Activated CD8-positive, alpha-beta T cell treated with anti-CD3 and anti-CD28 coated beads, Interleukin-2, amount 10 ng/mL, durations not matched to agents 7 days and 5 days (primary cell): ENCODE measurements at regions of chr12 and their contacts with region 1.

Region 1: DNA sequence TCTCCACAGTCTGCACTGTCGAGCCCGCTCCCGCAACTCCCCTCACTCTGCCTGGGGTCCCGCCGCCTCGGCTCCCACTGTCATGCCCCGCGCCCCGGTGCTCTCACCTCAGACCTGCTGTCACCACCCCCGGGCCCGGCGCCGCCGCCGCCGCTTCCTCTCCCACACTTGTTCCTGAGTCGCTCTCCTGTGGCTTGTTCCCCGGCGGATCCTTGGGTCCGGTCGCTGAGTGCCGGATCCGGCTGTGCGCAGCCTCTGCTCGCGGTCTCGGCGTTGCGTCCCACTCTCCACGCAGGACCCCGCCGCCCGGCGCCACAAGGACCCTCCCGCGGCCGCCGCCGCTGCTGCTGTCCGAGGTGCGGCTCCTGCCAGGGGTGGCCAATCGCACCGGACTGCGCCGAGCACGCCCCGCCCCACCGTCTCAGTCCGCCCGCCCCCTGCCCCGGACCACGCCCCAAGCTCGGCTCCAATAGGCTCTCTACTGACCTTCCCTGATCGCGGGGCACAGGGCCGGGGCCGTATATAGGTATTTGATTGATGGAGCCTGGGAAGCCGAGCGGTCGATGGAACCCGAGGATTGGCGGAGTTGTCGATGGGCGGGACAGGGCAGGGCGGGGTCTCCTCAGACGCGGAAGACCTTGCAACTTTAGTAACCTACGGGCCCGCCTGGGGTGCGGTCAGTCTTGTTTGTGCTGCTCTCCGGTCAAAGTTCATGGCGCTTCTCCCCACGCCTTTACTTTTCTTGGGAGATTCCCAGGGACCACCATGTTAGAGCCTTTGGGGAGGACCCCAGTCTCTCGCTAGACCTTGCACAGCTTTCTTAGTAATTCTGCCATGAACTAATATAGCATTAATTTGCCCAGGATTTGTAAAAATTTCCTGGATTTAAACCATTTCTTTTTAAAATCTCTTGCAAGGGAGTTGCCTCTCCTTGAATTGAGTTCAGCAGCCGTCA is at the start of gene TAOK3:
- DNase-seq: peak; percentile 98
- ATAC-seq: peak; percentile 89
- H3K4me3 Mint-ChIP-seq: peak within 1 kb of the TSS; percentile 92
- H3K27ac Mint-ChIP-seq: peak within 1 kb of the TSS; percentile 85
- H3K4me1 Mint-ChIP-seq: peaks cover 47% of the 10 kb centered on the region
- H3K27me3 Mint-ChIP-seq: peaks cover 3% of the 10 kb centered on the region
- total RNA-seq, gene TAOK3: 57.1 to 61.4 TPM

Region 2: DNA sequence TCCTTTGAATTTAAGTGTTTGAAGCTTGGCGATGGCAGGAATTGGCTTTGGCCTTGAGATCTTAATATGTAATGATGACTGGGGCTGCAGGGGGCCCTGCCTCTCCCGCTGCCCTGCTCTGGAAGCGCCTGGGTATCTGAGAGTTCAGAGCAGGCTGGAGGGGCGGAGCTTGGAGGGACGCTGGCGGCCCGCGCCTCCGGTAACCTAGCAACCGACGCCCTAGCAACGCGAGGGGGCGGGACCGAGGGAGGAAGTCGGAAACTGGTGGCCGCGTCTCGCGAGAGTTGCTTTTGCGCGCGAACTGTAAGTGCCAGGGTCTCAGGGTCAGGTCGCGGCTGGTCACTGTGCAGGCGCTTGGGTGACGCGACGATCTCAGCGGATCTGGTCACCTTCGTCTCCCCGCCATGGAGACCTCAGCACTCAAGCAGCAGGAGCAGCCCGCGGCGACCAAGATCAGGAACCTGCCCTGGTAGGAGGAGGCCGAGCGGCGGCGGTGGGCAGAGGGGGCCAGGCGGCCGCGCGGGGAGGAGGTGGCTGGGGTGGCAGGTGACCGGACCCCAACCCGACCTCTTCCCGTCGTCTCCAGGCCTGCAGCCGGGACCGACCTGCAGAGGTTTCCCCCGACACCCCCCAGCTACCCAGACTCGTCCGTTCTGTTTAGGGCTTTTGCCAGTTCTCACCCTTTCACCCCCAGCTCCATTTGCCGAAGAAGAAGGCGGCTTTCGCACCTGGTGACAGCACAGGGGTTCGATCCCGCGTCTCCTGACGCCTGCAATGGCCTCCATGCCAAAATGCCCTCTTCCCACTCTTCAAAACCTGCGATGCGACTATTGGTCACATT is 356.2 kb before region 1 on chr12 and contains the start of gene RFC5:
- CTCF ChIA-PET with region 1: interaction called, 11 read pairs
- POLR2A ChIA-PET with region 1: no interaction called
- DNase-seq: peak; percentile 98
- ATAC-seq: peak; percentile 96
- H3K4me3 Mint-ChIP-seq: peak within 1 kb of the TSS; percentile 98
- H3K27ac Mint-ChIP-seq: peak within 1 kb of the TSS; percentile 94
- H3K4me1 Mint-ChIP-seq: peaks cover 31% of the 10 kb centered on the region
- H3K27me3 Mint-ChIP-seq: peaks cover 6% of the 10 kb centered on the region
- total RNA-seq, gene RFC5: 52.5 to 57.6 TPM

Region 3: GRCh38 chr12:118120579-118121363 is 252.0 kb before region 1 on chr12:
- CTCF ChIA-PET with region 1: interaction called, 69 read pairs
- POLR2A ChIA-PET with region 1: no interaction called
- DNase-seq: peak; percentile 75
- ATAC-seq: peak; percentile 77
- H3K4me3 Mint-ChIP-seq: no peak overlapping the region
- H3K27ac Mint-ChIP-seq: peak overlapping the region; percentile 62
- H3K4me1 Mint-ChIP-seq: peaks cover 9% of the 10 kb centered on the region
- H3K27me3 Mint-ChIP-seq: no peaks in the 10 kb centered on the region

Region 4: GRCh38 chr12:118164798-118165486 is 207.9 kb before region 1 on chr12:
- CTCF ChIA-PET with region 1: interaction called, 33 read pairs
- POLR2A ChIA-PET with region 1: no interaction called
- DNase-seq: no peak
- ATAC-seq: no peak
- H3K4me3 Mint-ChIP-seq: no peak overlapping the region
- H3K27ac Mint-ChIP-seq: no peak overlapping the region
- H3K4me1 Mint-ChIP-seq: peaks cover 2% of the 10 kb centered on the region
- H3K27me3 Mint-ChIP-seq: no peaks in the 10 kb centered on the region

Region 5: DNA sequence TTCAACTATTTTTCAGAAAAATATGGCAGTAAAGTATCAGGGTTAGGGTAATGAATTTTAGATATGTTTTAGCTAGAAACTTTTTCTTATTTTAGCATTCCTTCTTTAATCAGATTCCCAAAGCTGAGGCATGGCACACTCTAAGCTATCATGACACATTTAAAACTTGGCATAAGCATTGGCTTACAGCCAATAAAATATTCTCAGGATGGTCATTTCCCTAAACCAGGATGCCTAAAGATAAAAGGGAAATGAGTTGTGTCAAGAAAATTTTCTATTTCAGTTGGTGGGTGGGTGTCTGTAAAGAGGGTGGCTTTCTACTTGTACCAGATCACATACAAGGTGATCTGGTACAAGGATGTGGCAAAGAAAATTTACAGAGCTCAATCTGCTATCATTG is 189.1 kb before region 1 on chr12:
- CTCF ChIA-PET with region 1: interaction called, 107 read pairs
- POLR2A ChIA-PET with region 1: interaction called, 3 read pairs
- DNase-seq: no peak
- ATAC-seq: no peak
- H3K4me3 Mint-ChIP-seq: no peak overlapping the region
- H3K27ac Mint-ChIP-seq: no peak overlapping the region
- H3K4me1 Mint-ChIP-seq: peaks cover 5% of the 10 kb centered on the region
- H3K27me3 Mint-ChIP-seq: no peaks in the 10 kb centered on the region

Region 6: DNA sequence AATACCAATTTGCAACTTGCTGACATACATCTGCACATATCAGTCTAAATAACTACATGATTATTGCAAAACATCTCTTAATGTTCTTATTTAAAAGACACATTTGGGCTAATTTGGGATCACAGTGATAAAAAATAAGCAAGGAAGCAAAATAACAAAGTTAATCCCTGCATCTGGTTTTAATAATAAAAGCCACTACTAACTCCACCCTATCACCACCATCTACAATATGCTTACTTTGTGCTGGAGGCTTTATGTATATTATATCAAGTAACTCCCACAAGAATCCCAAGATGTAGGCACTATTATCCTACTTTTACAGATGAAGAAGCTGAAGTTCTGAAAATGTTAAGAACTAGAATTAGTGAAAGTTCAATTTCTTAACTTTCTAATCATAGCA is 45.8 kb before region 1 on chr12:
- CTCF ChIA-PET with region 1: no interaction called
- POLR2A ChIA-PET with region 1: no interaction called
- DNase-seq: no peak
- ATAC-seq: no peak
- H3K4me3 Mint-ChIP-seq: no peak overlapping the region
- H3K27ac Mint-ChIP-seq: no peak overlapping the region
- H3K4me1 Mint-ChIP-seq: peaks cover 9% of the 10 kb centered on the region
- H3K27me3 Mint-ChIP-seq: no peaks in the 10 kb centered on the region

Region 7: GRCh38 chr12:118346895-118347294 is 25.9 kb before region 1 on chr12:
- CTCF ChIA-PET with region 1: interaction called, 13 read pairs
- POLR2A ChIA-PET with region 1: interaction called, 3 read pairs
- DNase-seq: no peak
- ATAC-seq: no peak
- H3K4me3 Mint-ChIP-seq: no peak overlapping the region
- H3K27ac Mint-ChIP-seq: no peak overlapping the region
- H3K4me1 Mint-ChIP-seq: peaks cover 1% of the 10 kb centered on the region
- H3K27me3 Mint-ChIP-seq: no peaks in the 10 kb centered on the region

Region 8: GRCh38 chr12:118391424-118391823 is 18.6 kb after region 1 on chr12:
- CTCF ChIA-PET with region 1: interaction called, 26 read pairs
- POLR2A ChIA-PET with region 1: no interaction called
- DNase-seq: no peak
- ATAC-seq: no peak
- H3K4me3 Mint-ChIP-seq: no peak overlapping the region
- H3K27ac Mint-ChIP-seq: no peak overlapping the region
- H3K4me1 Mint-ChIP-seq: no peaks in the 10 kb centered on the region
- H3K27me3 Mint-ChIP-seq: no peaks in the 10 kb centered on the region

Region 9: DNA sequence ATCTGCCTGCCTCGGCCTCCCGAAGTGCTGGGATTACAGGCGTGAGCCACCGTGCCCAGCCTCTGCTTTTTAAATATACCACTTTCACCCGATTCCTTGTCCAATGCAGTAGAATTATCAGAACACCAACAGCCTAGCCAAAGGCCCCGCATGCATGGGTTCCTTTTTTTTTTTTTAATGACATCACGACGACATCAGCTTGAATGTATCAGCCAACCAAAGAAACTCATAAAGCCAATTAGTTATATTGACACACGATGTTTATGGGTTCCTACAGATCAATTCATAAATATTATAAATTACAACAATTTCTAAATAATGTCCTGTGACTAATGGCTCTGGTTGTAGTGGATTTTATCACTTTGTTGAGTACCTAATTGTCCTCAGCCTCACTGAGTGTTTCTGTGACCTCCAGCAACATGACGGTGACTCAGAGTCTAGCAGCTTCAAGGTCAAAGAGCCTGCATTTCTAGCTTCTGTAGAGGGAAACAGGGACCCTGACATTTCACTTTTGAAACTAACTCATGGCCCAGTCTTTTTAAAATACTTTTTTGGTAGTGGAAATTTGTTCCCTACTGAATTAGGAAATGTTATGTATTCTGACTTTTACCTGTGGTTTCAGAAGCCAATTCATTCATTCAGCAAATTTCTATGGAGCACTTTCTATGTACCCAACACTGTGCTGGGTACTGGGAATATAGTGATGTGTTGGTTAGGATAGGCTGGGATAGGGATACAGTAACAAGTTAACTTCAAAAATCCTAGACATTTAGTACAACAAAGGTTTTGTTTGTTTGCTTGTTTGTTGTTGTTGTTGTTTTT is 147.6 kb after region 1 on chr12:
- CTCF ChIA-PET with region 1: no interaction called
- POLR2A ChIA-PET with region 1: no interaction called
- DNase-seq: no peak
- ATAC-seq: no peak
- H3K4me3 Mint-ChIP-seq: no peak overlapping the region
- H3K27ac Mint-ChIP-seq: no peak overlapping the region
- H3K4me1 Mint-ChIP-seq: no peaks in the 10 kb centered on the region
- H3K27me3 Mint-ChIP-seq: no peaks in the 10 kb centered on the region